ENCODE measurements at regions of chr12 and their contacts with region 1.

Region 1: GRCh38 chr12:70365648-70366518 is at the start of gene KCNMB4:
- DNase-seq: peak; percentile 48 to 85 (median 68)
- ATAC-seq: peak; percentile 86
- H3K4me3 ChIP-seq: peak within 1 kb of the TSS; percentile 70
- H3K4me3 Mint-ChIP-seq: peak within 1 kb of the TSS; percentile 94 to 99 (median 97)
- H3K27ac ChIP-seq: peak within 1 kb of the TSS; percentile 71
- H3K27ac Mint-ChIP-seq: peak within 1 kb of the TSS; percentile 58 to 91 (median 89)
- H3K4me1 ChIP-seq: peaks cover 16 to 19% of the 10 kb centered on the region in 2 donors
- H3K4me1 Mint-ChIP-seq: peaks cover 12 to 41% (median 34%) of the 10 kb centered on the region in 7 donors
- H3K27me3 ChIP-seq: peaks cover 0 to 4% of the 10 kb centered on the region in 2 donors
- H3K27me3 Mint-ChIP-seq: peaks cover 0 to 54% (median 0%) of the 10 kb centered on the region in 5 donors
- total RNA-seq, gene KCNMB4: 0.31 to 1.9 (median 1.4) TPM

Region 2: DNA sequence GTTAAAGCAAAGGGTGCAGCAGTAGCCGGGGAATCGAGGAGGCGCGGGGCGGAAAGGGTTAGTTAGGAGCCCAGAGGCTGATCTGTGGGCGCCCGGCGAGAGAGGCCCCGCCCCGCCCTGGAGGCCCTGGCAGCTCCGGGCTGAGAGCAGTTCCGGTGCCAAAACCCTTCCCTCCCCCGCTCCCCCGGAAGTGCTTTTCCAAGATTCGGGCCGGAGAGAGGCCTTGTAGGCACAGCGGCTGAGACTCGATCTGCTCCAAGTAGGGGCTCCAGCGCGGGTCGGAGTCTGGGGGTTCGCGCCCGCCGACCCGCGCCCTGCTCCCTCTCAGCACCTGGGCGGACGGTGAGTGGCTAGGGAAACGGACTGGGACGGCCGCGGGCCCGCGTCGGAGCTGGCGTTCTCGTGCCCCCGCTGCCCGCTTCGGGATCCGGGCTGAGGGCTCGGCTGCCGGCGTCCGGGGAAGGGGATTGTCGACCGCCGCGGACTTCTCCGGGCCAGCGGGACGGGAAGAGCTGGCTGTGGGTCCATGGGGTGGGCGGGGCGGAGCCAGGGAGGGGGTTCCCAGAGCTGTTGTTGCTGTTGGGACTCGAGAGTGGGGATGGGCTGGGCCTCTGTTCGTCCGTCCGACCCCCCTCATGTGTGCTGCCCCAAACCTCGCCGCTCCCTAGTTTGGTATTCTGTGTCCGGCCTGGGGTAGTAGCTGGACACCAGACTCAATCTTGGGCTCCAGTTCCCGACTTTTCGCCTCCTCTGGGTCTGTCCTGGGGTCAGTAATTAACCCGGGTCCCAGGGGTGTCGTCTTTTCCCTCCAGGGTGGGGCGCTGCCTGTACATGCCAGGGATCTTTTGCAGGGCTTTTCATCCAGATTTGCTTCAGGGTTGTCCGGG is 895.5 kb before region 1 on chr12 and contains the start of gene FRS2:
- CTCF ChIA-PET with region 1: no interaction called
- POLR2A ChIA-PET with region 1: no interaction called
- intact Hi-C with region 1: loop called in 1 of 2 experiments (anchors 2 kb)
- DNase-seq: peak; percentile 66 to 87 (median 81)
- ATAC-seq: peak; percentile 99
- H3K4me3 ChIP-seq: peak within 1 kb of the TSS; percentile 80
- H3K4me3 Mint-ChIP-seq: peak within 1 kb of the TSS; percentile 91 to 100 (median 96)
- H3K27ac ChIP-seq: peak within 1 kb of the TSS; percentile 94
- H3K27ac Mint-ChIP-seq: peak within 1 kb of the TSS; percentile 91 to 99 (median 97)
- H3K4me1 ChIP-seq: peaks cover 11 to 12% of the 10 kb centered on the region in 2 donors
- H3K4me1 Mint-ChIP-seq: peaks cover 41 to 60% (median 51%) of the 10 kb centered on the region in 7 donors
- H3K27me3 ChIP-seq: no peaks in the 10 kb centered on the region
- H3K27me3 Mint-ChIP-seq: no peaks in the 10 kb centered on the region
- total RNA-seq, gene FRS2: 17.5 to 30.1 (median 24.0) TPM

Region 3: DNA sequence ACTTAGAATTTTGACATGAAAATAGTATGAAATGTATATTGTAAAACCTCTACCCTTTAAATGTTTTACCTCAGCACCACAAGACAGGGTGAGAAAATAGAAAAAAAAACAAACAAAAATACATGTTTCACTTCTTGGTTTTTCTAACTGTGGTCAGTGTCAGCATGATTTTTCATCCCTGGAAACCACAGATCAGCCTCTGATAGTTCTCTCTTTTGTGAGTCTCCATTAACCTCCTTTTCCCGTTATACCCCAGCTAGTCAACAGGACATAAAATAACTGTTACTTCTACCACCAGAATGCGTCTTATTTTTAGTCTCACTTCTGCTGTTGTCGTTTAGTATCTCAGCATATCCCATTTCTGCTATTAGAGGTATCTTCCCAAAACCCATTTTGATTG is 48.1 kb before region 1 on chr12:
- CTCF ChIA-PET with region 1: no interaction called
- POLR2A ChIA-PET with region 1: no interaction called
- intact Hi-C with region 1: loop called in 1 of 2 experiments (anchors 5 kb)
- DNase-seq: no peak
- ATAC-seq: peak; percentile 69
- H3K4me3 ChIP-seq: no peak overlapping the region
- H3K4me3 Mint-ChIP-seq: peak overlapping the region in 3 of 10 donors; percentile 4 to 10 (median 6)
- H3K27ac ChIP-seq: no peak overlapping the region
- H3K27ac Mint-ChIP-seq: peak overlapping the region in 3 of 9 donors; percentile 22 to 36 (median 27)
- H3K4me1 ChIP-seq: peaks cover 0 to 5% of the 10 kb centered on the region in 2 donors
- H3K4me1 Mint-ChIP-seq: peaks cover 26 to 75% (median 61%) of the 10 kb centered on the region in 7 donors
- H3K27me3 ChIP-seq: no peaks in the 10 kb centered on the region
- H3K27me3 Mint-ChIP-seq: no peaks in the 10 kb centered on the region

Region 4: DNA sequence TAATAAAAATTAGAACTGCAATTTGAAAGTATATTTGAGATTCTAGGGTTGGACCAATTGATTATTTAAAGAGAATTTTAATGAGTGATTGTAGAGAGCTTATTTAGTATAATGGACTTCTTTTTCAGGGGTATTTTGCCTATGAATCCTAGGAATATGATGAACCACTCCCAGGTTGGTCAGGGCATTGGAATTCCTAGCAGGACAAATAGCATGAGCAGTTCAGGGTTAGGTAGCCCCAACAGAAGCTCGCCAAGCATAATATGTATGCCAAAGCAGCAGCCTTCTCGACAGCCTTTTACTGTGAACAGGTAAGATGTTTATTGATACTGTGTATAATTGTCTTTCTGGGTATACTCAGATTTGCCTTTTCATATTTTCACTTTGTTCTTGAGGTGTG is 35.7 kb before region 1 on chr12:
- CTCF ChIA-PET with region 1: no interaction called
- POLR2A ChIA-PET with region 1: no interaction called
- intact Hi-C with region 1: loop called in 1 of 2 experiments (anchors 5 kb)
- DNase-seq: no peak
- ATAC-seq: no peak
- H3K4me3 ChIP-seq: no peak overlapping the region
- H3K4me3 Mint-ChIP-seq: no peak overlapping the region
- H3K27ac ChIP-seq: no peak overlapping the region
- H3K27ac Mint-ChIP-seq: no peak overlapping the region
- H3K4me1 ChIP-seq: no peaks in the 10 kb centered on the region
- H3K4me1 Mint-ChIP-seq: peaks cover 3 to 61% (median 54%) of the 10 kb centered on the region in 7 donors
- H3K27me3 ChIP-seq: no peaks in the 10 kb centered on the region
- H3K27me3 Mint-ChIP-seq: no peaks in the 10 kb centered on the region

Region 5: DNA sequence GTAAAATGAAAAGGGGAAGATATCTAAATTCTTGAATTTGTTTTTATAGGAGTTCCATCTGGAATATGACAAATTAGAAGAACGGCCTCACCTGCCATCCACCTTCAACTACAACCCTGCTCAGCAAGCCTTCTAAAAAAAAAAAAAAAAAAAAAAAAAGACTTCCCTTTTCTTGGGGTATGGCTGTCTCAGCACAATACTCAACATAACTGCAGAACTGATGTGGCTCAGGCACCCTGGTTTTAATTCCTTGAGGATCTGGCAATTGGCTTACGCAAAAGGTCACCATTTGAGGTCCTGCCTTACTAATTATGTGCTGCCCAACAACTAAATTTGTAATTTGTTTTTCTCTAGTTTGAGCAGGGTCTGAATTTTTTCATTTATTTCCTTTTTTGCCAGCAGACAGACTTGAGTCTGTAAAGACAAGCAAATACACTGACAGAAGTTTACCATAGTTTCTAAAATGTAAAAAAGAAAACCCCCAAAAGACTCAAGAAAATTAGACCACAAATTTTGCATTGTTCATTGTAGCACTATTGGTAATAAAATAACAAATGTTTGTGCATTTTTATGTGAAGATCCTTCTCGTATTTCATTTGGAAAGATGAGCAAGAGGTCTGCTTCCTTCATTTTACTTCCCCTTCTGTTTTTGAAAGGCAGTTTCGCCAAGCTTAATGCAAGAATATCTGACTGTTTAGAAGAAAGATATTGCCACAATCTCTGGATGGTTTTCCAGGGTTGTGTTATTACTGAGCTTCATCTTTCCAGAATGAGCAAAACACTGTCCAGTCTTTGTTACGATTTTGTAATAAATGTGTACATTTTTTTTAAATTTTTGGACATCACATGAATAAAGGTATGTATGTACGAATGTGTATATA is 11.9 kb before region 1 on chr12:
- CTCF ChIA-PET with region 1: interaction called, 3 read pairs
- POLR2A ChIA-PET with region 1: interaction called, 4 read pairs
- intact Hi-C with region 1: loop called in 1 of 2 experiments (anchors 1 kb)
- DNase-seq: no peak
- ATAC-seq: peak; percentile 29
- H3K4me3 ChIP-seq: no peak overlapping the region
- H3K4me3 Mint-ChIP-seq: peak overlapping the region in 1 of 10 donors; percentile 32
- H3K27ac ChIP-seq: no peak overlapping the region
- H3K27ac Mint-ChIP-seq: peak overlapping the region in 3 of 9 donors; percentile 52 to 67 (median 63)
- H3K4me1 ChIP-seq: no peaks in the 10 kb centered on the region
- H3K4me1 Mint-ChIP-seq: peaks cover 0 to 21% (median 14%) of the 10 kb centered on the region in 7 donors
- H3K27me3 ChIP-seq: no peaks in the 10 kb centered on the region
- H3K27me3 Mint-ChIP-seq: no peaks in the 10 kb centered on the region

Region 6: DNA sequence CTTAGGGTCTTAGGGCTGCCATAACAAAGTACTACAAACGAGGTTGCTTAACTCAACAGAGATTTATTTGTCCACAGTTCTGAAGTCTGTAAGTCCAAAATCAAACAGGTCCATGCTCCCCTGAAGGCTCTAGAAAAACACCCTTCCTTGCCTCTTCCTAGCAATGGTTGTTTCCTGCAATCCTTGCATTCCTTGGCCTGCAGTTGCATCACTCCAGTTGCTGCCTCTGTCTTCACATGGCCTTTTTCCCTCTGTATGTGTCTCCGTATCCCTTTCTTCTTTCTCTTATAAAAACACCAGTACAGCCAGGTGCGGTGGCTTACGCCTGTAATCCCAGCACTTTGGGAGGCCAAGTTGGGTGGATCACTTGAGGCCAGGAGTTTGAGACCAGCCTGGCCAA is 17.6 kb after region 1 on chr12:
- CTCF ChIA-PET with region 1: no interaction called
- POLR2A ChIA-PET with region 1: no interaction called
- intact Hi-C with region 1: no loop called
- DNase-seq: no peak
- ATAC-seq: no peak
- H3K4me3 ChIP-seq: no peak overlapping the region
- H3K4me3 Mint-ChIP-seq: no peak overlapping the region
- H3K27ac ChIP-seq: no peak overlapping the region
- H3K27ac Mint-ChIP-seq: no peak overlapping the region
- H3K4me1 ChIP-seq: no peaks in the 10 kb centered on the region
- H3K4me1 Mint-ChIP-seq: peaks cover 0 to 9% (median 0%) of the 10 kb centered on the region in 7 donors
- H3K27me3 ChIP-seq: no peaks in the 10 kb centered on the region
- H3K27me3 Mint-ChIP-seq: no peaks in the 10 kb centered on the region

Region 7: DNA sequence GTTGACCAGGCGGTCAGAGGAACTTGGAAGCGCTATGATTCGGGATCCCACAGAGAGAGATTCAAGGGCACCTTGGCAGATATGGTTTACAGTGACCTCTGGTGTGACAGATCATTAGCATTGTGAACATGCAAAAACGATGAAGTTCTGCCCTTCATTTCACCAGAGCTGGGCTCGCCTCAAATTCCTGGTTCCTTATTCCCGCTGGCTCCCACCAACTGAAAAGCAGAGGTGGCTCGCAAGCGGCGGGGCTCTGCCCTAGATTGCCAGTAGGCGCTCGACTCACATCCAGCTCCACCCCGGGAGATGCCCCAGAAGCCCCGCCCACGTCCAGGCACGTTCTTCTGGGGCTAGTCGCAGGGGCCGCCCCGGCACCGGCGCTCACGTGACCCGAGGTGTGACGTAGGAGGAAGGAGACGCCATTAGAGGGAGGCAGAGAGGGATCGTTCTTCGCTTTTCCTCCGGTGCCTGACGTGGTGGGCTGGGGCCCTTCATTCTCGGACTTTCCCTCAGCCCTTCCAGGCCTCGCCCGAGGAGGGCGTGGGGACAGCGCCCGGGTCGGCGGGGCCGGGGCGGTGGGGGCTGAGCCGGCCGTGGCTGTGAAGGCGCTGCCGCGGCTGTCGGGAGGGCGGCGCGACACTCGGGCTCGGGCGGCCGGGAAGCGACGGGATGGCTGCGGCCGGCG is 1388.7 kb after region 1 on chr12 and contains the start of gene RAB21:
- CTCF ChIA-PET with region 1: no interaction called
- POLR2A ChIA-PET with region 1: no interaction called
- intact Hi-C with region 1: loop called in 1 of 2 experiments (anchors 2 kb)
- DNase-seq: peak; percentile 95 to 99 (median 97)
- ATAC-seq: peak; percentile 94
- H3K4me3 ChIP-seq: peak within 1 kb of the TSS; percentile 70
- H3K4me3 Mint-ChIP-seq: peak within 1 kb of the TSS; percentile 86 to 95 (median 94)
- H3K27ac ChIP-seq: peak within 1 kb of the TSS; percentile 100
- H3K27ac Mint-ChIP-seq: peak within 1 kb of the TSS; percentile 91 to 98 (median 95)
- H3K4me1 ChIP-seq: peaks cover 10 to 11% of the 10 kb centered on the region in 2 donors
- H3K4me1 Mint-ChIP-seq: peaks cover 21 to 47% (median 43%) of the 10 kb centered on the region in 7 donors
- H3K27me3 ChIP-seq: no peaks in the 10 kb centered on the region
- H3K27me3 Mint-ChIP-seq: peaks cover 0 to 32% (median 5%) of the 10 kb centered on the region in 5 donors
- total RNA-seq, gene RAB21: 53.6 to 81.7 (median 73.7) TPM